ENCODE measurements at regions of chr3 and their contacts with region 1.

Region 1: DNA sequence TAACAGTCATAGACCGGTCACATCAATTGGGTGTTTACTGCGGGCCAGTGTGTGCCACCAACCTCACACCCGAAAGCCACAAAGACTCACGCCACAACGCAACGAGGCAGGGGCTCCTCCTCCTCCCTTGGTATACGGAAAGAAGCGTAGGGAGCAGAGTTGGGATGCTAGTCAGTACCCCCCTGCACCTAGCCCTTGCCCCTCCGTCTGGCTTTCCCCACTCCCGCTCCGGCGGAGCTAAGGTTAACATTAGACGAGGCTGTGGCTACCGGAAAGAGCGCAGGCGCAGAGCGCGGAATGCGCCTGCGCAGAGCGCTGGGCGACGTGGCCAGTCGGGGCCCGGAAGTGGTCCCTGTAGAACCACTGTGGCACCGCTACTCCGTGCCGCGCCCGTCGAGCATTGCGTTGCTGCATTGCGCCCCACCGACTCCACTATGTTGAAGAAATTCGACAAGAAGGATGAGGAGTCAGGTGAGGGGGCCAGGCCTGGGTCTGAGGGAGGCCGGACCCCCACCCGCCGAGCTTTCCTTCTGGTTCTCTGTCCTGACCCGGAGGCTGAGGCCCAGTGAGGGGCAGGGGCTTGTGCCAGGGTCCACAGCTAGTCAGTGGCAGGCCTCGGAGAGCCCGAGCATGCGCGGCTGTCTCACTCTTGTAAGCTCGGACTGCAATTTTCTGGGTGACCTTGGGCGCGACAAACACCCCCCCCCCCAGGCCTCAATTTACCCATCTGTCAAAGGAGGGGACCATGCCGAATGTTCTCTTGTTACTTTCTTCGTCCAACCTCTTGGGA is at the start of gene COPG1:
- DNase-seq: peak; percentile 82 to 91 (median 88)
- H3K4me3 ChIP-seq: peak within 1 kb of the TSS; percentile 88 to 91
- H3K4me3 Mint-ChIP-seq: peak within 1 kb of the TSS; percentile 91 to 98 (median 96)
- H3K27ac ChIP-seq: peak within 1 kb of the TSS; percentile 92
- H3K27ac Mint-ChIP-seq: peak within 1 kb of the TSS; percentile 92 to 98 (median 97)
- H3K4me1 ChIP-seq: peaks cover 30% of the 10 kb centered on the region
- H3K4me1 Mint-ChIP-seq: peaks cover 21 to 64% (median 42%) of the 10 kb centered on the region in 4 donors
- H3K27me3 ChIP-seq: no peaks in the 10 kb centered on the region
- H3K27me3 Mint-ChIP-seq: no peaks in the 10 kb centered on the region
- total RNA-seq, gene COPG1: 147 TPM

Region 2: GRCh38 chr3:128879125-128879969 is 370.1 kb before region 1 on chr3 and contains the start of gene ACAD9:
- CTCF ChIA-PET with region 1: interaction called, 4 read pairs
- POLR2A ChIA-PET with region 1: no interaction called
- intact Hi-C with region 1: loop called (anchors 1 kb)
- DNase-seq: peak; percentile 97
- H3K4me3 ChIP-seq: peak within 1 kb of the TSS; percentile 82 to 91
- H3K4me3 Mint-ChIP-seq: peak within 1 kb of the TSS; percentile 85 to 97 (median 94)
- H3K27ac ChIP-seq: peak within 1 kb of the TSS; percentile 92
- H3K27ac Mint-ChIP-seq: peak within 1 kb of the TSS; percentile 92 to 99 (median 99)
- H3K4me1 ChIP-seq: peaks cover 38% of the 10 kb centered on the region
- H3K4me1 Mint-ChIP-seq: peaks cover 47 to 79% (median 61%) of the 10 kb centered on the region in 4 donors
- H3K27me3 ChIP-seq: no peaks in the 10 kb centered on the region
- H3K27me3 Mint-ChIP-seq: no peaks in the 10 kb centered on the region
- total RNA-seq, gene ACAD9: 54.9 to 62.2 TPM

Region 3: GRCh38 chr3:129016356-129016719 is 233.1 kb before region 1 on chr3:
- CTCF ChIA-PET with region 1: interaction called, 59 read pairs
- POLR2A ChIA-PET with region 1: interaction called, 24 read pairs
- intact Hi-C with region 1: no loop called
- DNase-seq: peak; percentile 54 to 74 (median 59)
- H3K4me3 ChIP-seq: peak overlapping the region; percentile 41 to 54
- H3K4me3 Mint-ChIP-seq: peak overlapping the region; percentile 54 to 89 (median 83)
- H3K27ac ChIP-seq: peak overlapping the region; percentile 64
- H3K27ac Mint-ChIP-seq: peak overlapping the region; percentile 85 to 99 (median 94)
- H3K4me1 ChIP-seq: peaks cover 36% of the 10 kb centered on the region
- H3K4me1 Mint-ChIP-seq: peaks cover 32 to 54% (median 44%) of the 10 kb centered on the region in 4 donors
- H3K27me3 ChIP-seq: no peaks in the 10 kb centered on the region
- H3K27me3 Mint-ChIP-seq: no peaks in the 10 kb centered on the region

Region 4: GRCh38 chr3:129068291-129068886 is 181.1 kb before region 1 on chr3:
- CTCF ChIA-PET with region 1: interaction called, 10 read pairs
- POLR2A ChIA-PET with region 1: no interaction called
- intact Hi-C with region 1: no loop called
- DNase-seq: no peak
- H3K4me3 ChIP-seq: no peak overlapping the region
- H3K4me3 Mint-ChIP-seq: peak overlapping the region; percentile 40 to 79 (median 68)
- H3K27ac ChIP-seq: no peak overlapping the region
- H3K27ac Mint-ChIP-seq: no peak overlapping the region
- H3K4me1 ChIP-seq: no peaks in the 10 kb centered on the region
- H3K4me1 Mint-ChIP-seq: peaks cover 0 to 5% (median 3%) of the 10 kb centered on the region in 4 donors
- H3K27me3 ChIP-seq: no peaks in the 10 kb centered on the region
- H3K27me3 Mint-ChIP-seq: peaks cover 3 to 10% of the 10 kb centered on the region in 2 donors

Region 5: DNA sequence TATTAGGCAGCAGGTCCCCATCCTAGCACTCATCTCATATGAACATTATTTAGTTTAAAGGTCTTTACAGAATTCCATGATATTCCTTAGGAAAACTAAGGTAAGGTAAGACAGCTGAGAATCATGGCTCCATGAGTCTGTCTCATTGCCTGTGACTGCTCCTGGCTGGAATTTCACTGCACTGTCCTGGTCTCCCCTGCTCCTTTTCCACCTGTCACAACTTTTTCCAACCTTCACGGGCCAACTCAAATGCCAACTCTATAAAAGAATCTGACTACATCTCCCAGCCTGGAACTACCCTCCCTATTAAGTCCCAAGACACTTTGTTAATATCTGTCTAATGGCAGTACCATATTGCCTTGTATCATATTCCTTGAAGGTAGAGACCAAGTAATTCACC is 73.4 kb before region 1 on chr3:
- CTCF ChIA-PET with region 1: interaction called, 10 read pairs
- POLR2A ChIA-PET with region 1: interaction called, 3 read pairs
- intact Hi-C with region 1: no loop called
- DNase-seq: no peak
- H3K4me3 ChIP-seq: no peak overlapping the region
- H3K4me3 Mint-ChIP-seq: peak overlapping the region in 7 of 8 donors; percentile 33 to 82 (median 63)
- H3K27ac ChIP-seq: peak overlapping the region; percentile 44
- H3K27ac Mint-ChIP-seq: peak overlapping the region; percentile 57 to 91 (median 81)
- H3K4me1 ChIP-seq: peaks cover 92% of the 10 kb centered on the region
- H3K4me1 Mint-ChIP-seq: peaks cover 50 to 94% (median 75%) of the 10 kb centered on the region in 4 donors
- H3K27me3 ChIP-seq: no peaks in the 10 kb centered on the region
- H3K27me3 Mint-ChIP-seq: no peaks in the 10 kb centered on the region

Region 6: GRCh38 chr3:129238945-129239706 is 10.3 kb before region 1 on chr3:
- CTCF ChIA-PET with region 1: interaction called, 12 read pairs
- POLR2A ChIA-PET with region 1: interaction called, 3 read pairs
- intact Hi-C with region 1: no loop called
- DNase-seq: peak in 1 of 5 donors; percentile 17
- H3K4me3 ChIP-seq: no peak overlapping the region
- H3K4me3 Mint-ChIP-seq: peak overlapping the region; percentile 33 to 78 (median 64)
- H3K27ac ChIP-seq: no peak overlapping the region
- H3K27ac Mint-ChIP-seq: peak overlapping the region in 5 of 7 donors; percentile 17 to 91 (median 76)
- H3K4me1 ChIP-seq: peaks cover 28% of the 10 kb centered on the region
- H3K4me1 Mint-ChIP-seq: peaks cover 7 to 18% (median 13%) of the 10 kb centered on the region in 4 donors
- H3K27me3 ChIP-seq: no peaks in the 10 kb centered on the region
- H3K27me3 Mint-ChIP-seq: no peaks in the 10 kb centered on the region

Region 7: DNA sequence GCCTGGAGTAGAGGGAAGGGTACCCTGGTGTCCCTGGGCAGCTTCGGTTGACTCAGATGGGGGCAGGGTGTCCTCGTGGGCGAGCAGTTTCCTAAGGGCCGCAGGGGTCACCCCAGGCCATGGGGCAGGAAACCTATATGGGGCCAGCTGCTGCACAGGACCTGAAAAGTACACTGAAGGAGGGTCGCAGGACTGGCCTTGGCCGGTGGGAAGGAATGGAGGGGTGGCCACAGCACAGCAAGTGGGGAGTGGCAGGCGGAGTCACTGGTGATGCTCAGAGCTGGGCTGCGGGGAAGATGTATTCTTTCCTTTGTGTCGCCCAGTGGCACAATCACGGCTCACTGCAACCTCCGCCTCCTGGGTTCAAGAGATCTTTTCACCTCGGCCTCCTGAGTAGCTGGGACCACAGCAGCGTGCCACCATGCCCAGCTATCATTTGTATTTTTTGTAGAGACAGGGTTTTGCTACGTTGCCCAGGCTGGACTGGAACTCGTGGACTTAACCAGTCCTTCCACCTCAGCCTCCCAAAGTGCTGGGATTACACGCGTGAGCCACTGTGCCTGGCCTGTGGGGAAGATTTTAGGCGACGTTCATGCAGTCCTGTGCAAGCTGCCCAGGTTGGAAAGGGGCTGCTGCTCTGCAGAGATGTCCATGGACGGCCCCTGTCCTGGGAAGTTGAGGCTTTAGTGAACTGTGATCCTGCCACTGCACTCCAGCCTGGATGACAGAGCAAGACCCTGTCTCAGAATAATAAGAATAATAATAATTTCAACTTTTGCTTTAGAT is 121.8 kb after region 1 on chr3:
- CTCF ChIA-PET with region 1: no interaction called
- POLR2A ChIA-PET with region 1: no interaction called
- intact Hi-C with region 1: no loop called
- DNase-seq: no peak
- H3K4me3 ChIP-seq: no peak overlapping the region
- H3K4me3 Mint-ChIP-seq: no peak overlapping the region
- H3K27ac ChIP-seq: no peak overlapping the region
- H3K27ac Mint-ChIP-seq: no peak overlapping the region
- H3K4me1 ChIP-seq: no peaks in the 10 kb centered on the region
- H3K4me1 Mint-ChIP-seq: no peaks in the 10 kb centered on the region
- H3K27me3 ChIP-seq: no peaks in the 10 kb centered on the region
- H3K27me3 Mint-ChIP-seq: no peaks in the 10 kb centered on the region